Ascending aorta (tissue), 2 donors: ENCODE measurements at regions of chr7 and their contacts with region 1.

Region 1: DNA sequence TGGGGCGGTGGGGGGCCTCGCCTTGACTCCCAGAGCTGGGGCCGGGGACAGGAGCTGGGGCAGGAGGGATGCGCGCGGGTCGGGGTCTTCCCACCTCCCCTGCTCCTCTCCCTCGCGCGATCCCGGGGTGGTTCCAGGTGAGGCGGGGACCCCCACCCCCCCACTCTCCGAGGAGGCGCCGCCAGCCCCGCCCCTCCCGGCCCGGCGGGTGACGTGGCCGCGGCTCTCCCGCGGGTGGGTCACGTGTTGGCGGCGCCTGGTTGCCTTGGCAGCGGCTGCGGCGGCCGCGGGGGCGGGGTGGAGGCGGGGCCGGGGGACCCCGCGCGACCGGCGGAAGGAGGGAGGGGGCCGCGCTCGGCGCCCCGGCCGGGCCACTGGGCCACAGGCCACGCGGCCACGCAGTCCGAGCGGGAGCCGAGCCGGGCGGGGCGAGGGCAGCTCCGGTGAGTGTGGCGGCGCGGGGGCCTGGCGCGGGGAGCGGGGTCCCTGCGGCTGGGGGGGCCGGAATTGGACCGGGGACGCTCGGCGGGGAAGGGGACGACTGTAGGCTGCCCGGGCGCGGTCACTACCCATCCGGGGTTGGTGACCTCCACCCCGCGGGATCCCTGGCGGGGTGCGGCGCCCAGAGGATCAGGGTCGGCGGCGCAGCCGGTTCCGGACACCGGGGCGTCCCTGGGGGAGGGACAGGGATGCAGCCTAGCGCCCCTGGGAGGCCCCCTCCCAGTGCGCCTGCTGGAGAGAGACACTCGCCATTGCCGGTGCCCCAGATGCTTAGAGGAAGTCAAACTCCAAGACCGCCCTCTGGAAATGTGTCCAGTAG is at the start of gene ORAI2:
- DNase-seq: peak in 1 of 2 donors; percentile 87
- H3K4me3 ChIP-seq: peak within 1 kb of the TSS; percentile 74 to 76
- H3K27ac ChIP-seq: peak within 1 kb of the TSS; percentile 44 to 65
- H3K4me1 ChIP-seq: peaks cover 0 to 10% of the 10 kb centered on the region in 2 donors
- H3K27me3 ChIP-seq: no peaks in the 10 kb centered on the region
- CTCF ChIP-seq: no peak
- total RNA-seq, gene ORAI2: 45.1 TPM

Region 2: GRCh38 chr7:102396027-102397019 is 37.1 kb before region 1 on chr7 and contains the start of gene PRKRIP1:
- intact Hi-C with region 1: loop called (anchors 5 kb)
- DNase-seq: peak; percentile 59 to 93
- H3K4me3 ChIP-seq: peak within 1 kb of the TSS; percentile 61 to 85
- H3K27ac ChIP-seq: peak within 1 kb of the TSS; percentile 60 to 71
- H3K4me1 ChIP-seq: peaks cover 5 to 6% of the 10 kb centered on the region in 2 donors
- H3K27me3 ChIP-seq: no peaks in the 10 kb centered on the region
- CTCF ChIP-seq: no peak
- total RNA-seq, gene PRKRIP1: 23.6 TPM

Region 3: DNA sequence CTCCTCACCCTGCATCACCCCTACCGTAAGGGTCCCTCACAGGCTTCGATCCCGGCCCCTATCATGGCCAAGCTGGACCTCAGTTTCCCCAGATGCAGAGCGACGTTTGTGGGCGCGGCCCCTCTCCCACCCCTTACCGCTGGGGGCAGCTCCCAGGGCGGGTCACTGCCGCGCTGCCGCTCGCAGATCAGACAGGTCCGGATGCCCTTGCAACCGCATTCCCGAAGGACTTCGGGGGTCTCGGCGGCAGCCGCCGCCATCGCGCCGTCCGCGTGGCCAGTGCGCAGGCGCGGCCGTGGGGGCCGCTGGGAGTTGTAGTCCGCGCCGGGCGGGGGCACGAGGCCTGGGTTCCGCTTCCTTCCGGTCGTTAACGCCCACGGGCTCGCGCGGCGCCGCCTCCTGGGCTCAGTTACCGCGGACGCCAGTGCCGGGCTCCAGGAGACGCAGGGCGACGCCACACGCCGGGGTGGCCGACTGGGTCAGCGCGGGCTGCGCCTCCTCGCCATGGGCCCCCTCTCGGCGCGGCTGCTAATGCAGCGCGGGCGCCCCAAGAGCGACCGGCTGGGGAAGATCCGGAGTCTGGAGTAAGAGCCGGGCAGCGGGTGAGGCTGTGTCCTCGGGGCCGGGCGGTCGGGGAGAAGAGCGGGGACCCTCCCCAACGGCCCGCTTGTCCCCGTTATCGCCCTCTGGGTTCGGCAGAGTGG is 31.3 kb after region 1 on chr7 and contains the starts of genes ALKBH4 and LRWD1:
- intact Hi-C with region 1: loop called (anchors 2 kb)
- DNase-seq: peak; percentile 67 to 97
- H3K4me3 ChIP-seq: peak within 1 kb of the TSS; percentile 85 to 99
- H3K27ac ChIP-seq: peak within 1 kb of the TSS; percentile 64 to 78
- H3K4me1 ChIP-seq: peaks cover 11 to 15% of the 10 kb centered on the region in 2 donors
- H3K27me3 ChIP-seq: no peaks in the 10 kb centered on the region
- CTCF ChIP-seq: peak in 1 of 3 experiments; percentile 18
- total RNA-seq, gene ALKBH4: 26.4 TPM
- total RNA-seq, gene LRWD1: 24.4 TPM